ENCODE measurements at regions of chr6 and their contacts with region 1.

Region 1: DNA sequence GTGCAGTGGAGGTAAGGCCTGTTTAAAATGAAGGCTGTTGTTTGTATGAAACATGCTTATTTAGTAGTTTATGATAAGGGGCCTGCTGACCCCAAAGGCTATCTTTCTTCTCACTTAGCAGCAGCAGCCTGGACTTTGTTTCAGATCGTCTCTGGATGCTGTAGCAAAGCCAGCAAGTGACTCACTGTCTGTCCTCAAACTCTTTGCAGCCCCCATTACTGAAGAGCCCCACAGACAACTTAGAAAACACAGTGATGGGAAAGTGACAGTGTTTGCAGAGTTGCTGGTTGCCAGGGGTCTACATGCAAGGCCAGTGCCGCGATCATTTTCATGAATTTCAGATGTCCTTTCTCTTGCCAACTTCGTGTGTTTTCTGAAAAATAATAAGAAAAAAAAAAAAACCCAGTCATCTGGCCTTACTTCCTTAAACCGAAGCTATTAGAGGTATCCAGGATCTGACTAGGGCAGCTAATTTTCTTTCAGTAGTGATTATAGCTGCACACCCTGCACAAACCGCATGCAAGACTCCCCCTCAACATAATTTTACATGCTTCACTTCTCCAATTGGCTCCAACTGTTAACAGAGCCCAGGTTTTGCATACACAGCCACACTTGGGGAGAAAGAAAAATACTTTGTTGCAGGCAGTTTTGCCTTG is 11.6 kb upstream of the F13A1 start:
- DNase-seq: peak; percentile 95
- ATAC-seq: peak; percentile 81
- H3K4me3 ChIP-seq: peak overlapping the region; percentile 40; the same call in 1 of the 2 replicates
- H3K27ac ChIP-seq: peak overlapping the region; percentile 97
- H3K4me1 ChIP-seq: peaks cover 38% of the 10 kb centered on the region
- H3K27me3 ChIP-seq: no peaks in the 10 kb centered on the region
- CTCF ChIP-seq: no peak
- EP300 ChIP-seq: peak in 1 of 2 experiments; percentile 64; a peak in 3 of 4 replicates
- POLR2A ChIP-seq: no peak
- RAD21 ChIP-seq: 0 out of 2 replicates have a peak, but pooled peaks have one; percentile 3

Region 2: DNA sequence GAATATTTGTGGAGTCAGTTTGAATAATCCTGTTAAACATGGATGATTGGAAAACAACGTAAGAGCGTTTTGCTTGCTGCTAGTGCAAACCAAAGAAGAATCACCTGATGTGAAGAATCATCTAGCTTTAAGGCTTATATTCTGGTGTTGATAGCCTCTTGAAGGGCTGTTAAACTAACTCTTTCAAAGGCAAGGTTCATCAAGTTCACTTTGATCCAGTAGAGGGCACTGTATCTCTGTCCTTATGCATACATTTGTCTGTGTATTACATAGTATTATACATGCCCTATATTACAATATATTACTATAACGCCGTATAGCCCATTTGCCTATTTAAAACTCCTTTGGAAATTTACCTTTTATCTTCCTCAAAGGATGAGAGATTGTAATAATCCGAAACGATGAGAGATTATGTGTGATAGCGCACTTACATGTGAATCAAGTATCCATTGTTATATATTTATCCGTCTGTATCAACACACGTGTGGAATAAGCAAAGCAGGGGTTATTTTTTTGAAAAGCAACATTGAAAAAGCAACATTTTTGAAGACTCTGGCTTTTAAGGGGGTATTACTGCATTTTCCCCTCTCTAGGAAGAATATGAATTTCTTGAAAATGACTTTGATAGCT is 274.5 kb before region 1 on chr6:
- CTCF ChIA-PET with region 1: no interaction called
- POLR2A ChIA-PET with region 1: no interaction called
- RAD21 ChIA-PET with region 1: interaction called, 3 read pairs
- SMC1A ChIA-PET with region 1: interaction called, 4 read pairs
- in situ Hi-C with region 1: no loop called
- intact Hi-C with region 1: loop called (anchors 5 kb)
- DNase-seq: peak; percentile 53
- ATAC-seq: peak; percentile 97
- H3K4me3 ChIP-seq: no peak overlapping the region
- H3K27ac ChIP-seq: no peak overlapping the region
- H3K4me1 ChIP-seq: no peaks in the 10 kb centered on the region
- H3K27me3 ChIP-seq: no peaks in the 10 kb centered on the region; a peak in 2 of 4 replicates
- CTCF ChIP-seq: peak; percentile 54 to 68 (median 66); a peak in 5 of 6 replicates
- EP300 ChIP-seq: no peak
- POLR2A ChIP-seq: no peak
- RAD21 ChIP-seq: peak; percentile 74

Region 3: DNA sequence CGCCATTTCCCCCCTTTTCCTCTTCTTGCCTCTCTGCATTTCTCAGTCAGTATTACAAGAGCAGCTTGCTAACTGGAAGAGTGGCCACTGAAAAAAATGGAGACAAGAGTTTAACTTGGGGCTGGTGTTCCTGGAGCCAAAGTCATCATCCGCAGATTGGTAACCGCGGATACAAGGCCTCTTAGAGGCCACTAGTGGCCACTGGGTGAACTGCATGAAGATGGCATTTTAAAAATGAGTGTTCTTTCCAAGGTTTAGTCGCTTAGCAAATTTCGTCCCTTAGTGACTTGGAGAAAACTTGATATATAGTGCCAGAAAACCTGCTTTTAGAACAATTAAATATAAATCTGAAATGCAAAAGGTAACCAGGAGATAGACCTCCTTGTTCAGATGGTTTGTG is 16.4 kb before region 1 on chr6:
- CTCF ChIA-PET with region 1: interaction called, 10 read pairs
- POLR2A ChIA-PET with region 1: interaction called, 4 read pairs
- RAD21 ChIA-PET with region 1: interaction called, 10 read pairs
- SMC1A ChIA-PET with region 1: interaction called, 29 read pairs
- in situ Hi-C with region 1: no loop called
- intact Hi-C with region 1: no loop called
- DNase-seq: no peak
- ATAC-seq: peak; percentile 26; the same call in 2 of the 3 replicates
- H3K4me3 ChIP-seq: no peak overlapping the region
- H3K27ac ChIP-seq: no peak overlapping the region
- H3K4me1 ChIP-seq: peaks cover 11% of the 10 kb centered on the region
- H3K27me3 ChIP-seq: peaks cover 0 to 4% of the 10 kb centered on the region in 2 experiments; a peak in 2 of 4 replicates
- CTCF ChIP-seq: peak; percentile 78 to 89 (median 89)
- EP300 ChIP-seq: no peak
- POLR2A ChIP-seq: no peak
- RAD21 ChIP-seq: peak; percentile 75

Region 4: GRCh38 chr6:6390849-6391602 is 59.0 kb after region 1 on chr6:
- CTCF ChIA-PET with region 1: interaction called, 45 read pairs
- POLR2A ChIA-PET with region 1: interaction called, 69 read pairs
- RAD21 ChIA-PET with region 1: interaction called, 202 read pairs
- SMC1A ChIA-PET with region 1: interaction called, 217 read pairs
- in situ Hi-C with region 1: no loop called
- intact Hi-C with region 1: loop called (anchors 1 kb)
- DNase-seq: peak; percentile 78
- ATAC-seq: peak; percentile 74
- H3K4me3 ChIP-seq: peak overlapping the region; percentile 40
- H3K27ac ChIP-seq: peak overlapping the region; percentile 96
- H3K4me1 ChIP-seq: peaks cover 37% of the 10 kb centered on the region
- H3K27me3 ChIP-seq: no peaks in the 10 kb centered on the region
- CTCF ChIP-seq: no peak
- EP300 ChIP-seq: peak; percentile 40 to 71; a peak in 3 of 4 replicates
- POLR2A ChIP-seq: peak; percentile 40; the same call in 1 of the 2 replicates
- RAD21 ChIP-seq: peak; percentile 21; the same call in 1 of the 2 replicates

Region 5: GRCh38 chr6:6407071-6407741 is 75.1 kb after region 1 on chr6:
- CTCF ChIA-PET with region 1: interaction called, 13 read pairs
- POLR2A ChIA-PET with region 1: interaction called, 7 read pairs
- RAD21 ChIA-PET with region 1: interaction called, 55 read pairs
- SMC1A ChIA-PET with region 1: interaction called, 36 read pairs
- in situ Hi-C with region 1: loop called (anchors 5 kb)
- intact Hi-C with region 1: loop called (anchors 1 kb)
- DNase-seq: peak; percentile 97
- ATAC-seq: peak; percentile 95
- H3K4me3 ChIP-seq: peak overlapping the region; percentile 23; the same call in 1 of the 2 replicates
- H3K27ac ChIP-seq: peak overlapping the region; percentile 54
- H3K4me1 ChIP-seq: peaks cover 22% of the 10 kb centered on the region
- H3K27me3 ChIP-seq: no peaks in the 10 kb centered on the region
- CTCF ChIP-seq: no peak
- EP300 ChIP-seq: peak; percentile 76 to 83; a peak in 3 of 4 replicates
- POLR2A ChIP-seq: peak; percentile 47; the same call in 1 of the 2 replicates
- RAD21 ChIP-seq: 0 out of 2 replicates have a peak, but pooled peaks have one; percentile 8

Region 6: GRCh38 chr6:6494677-6495076 is 162.6 kb after region 1 on chr6:
- CTCF ChIA-PET with region 1: interaction called, 10 read pairs
- POLR2A ChIA-PET with region 1: interaction called, 4 read pairs
- RAD21 ChIA-PET with region 1: interaction called, 22 read pairs
- SMC1A ChIA-PET with region 1: interaction called, 17 read pairs
- in situ Hi-C with region 1: no loop called
- intact Hi-C with region 1: loop called (anchors 1 kb)
- DNase-seq: peak; percentile 45
- ATAC-seq: peak; percentile 100
- H3K4me3 ChIP-seq: no peak overlapping the region
- H3K27ac ChIP-seq: no peak overlapping the region
- H3K4me1 ChIP-seq: no peaks in the 10 kb centered on the region
- H3K27me3 ChIP-seq: no peaks in the 10 kb centered on the region
- CTCF ChIP-seq: peak; percentile 74 to 84 (median 78)
- EP300 ChIP-seq: no peak
- POLR2A ChIP-seq: no peak
- RAD21 ChIP-seq: peak; percentile 86

Measured in GM12878 (cell line).